ENCODE measurements at regions of chr16 and their contacts with region 1.

Region 1: DNA sequence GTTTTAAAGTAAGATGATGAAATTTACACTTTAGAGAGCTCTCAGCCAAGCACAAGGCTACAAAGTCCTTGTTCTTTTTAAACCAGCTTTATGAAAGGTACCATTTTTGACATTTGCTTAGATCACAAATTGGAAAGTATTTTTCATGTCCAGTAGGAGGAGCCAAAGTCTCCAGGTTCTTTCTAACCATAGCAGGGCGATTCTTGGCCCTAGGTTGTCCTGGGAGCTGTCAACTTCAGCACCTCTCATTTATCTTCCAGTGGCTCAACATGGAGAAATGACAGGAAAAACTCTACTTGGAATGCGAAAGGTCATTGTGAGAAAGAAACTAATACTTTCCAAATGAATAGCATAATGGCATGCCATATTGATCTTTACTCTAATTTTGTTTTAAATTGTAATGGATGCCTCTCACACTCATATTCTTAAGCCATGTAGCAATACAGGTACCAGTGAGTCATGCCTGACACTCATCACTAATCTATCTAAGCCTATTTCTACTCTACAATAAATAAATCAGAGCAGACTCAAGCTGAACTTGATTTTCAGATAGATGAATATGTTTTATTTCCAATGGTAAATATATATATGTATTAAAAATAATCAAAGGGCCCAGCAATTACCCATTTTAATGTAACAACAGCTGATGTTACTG is 919.1 kb upstream of the EEF2KMT start:
- DNase-seq: peak in 1 of 2 experiments; percentile 35
- H3K4me3 ChIP-seq: no peak overlapping the region
- H3K4me3 Mint-ChIP-seq: no peak overlapping the region
- H3K27ac Mint-ChIP-seq: no peak overlapping the region
- H3K4me1 ChIP-seq: no peaks in the 10 kb centered on the region
- H3K4me1 Mint-ChIP-seq: no peaks in the 10 kb centered on the region
- H3K27me3 ChIP-seq: no peaks in the 10 kb centered on the region
- H3K27me3 Mint-ChIP-seq: no peaks in the 10 kb centered on the region
- CTCF ChIP-seq: peak; percentile 33 to 51

Region 2: DNA sequence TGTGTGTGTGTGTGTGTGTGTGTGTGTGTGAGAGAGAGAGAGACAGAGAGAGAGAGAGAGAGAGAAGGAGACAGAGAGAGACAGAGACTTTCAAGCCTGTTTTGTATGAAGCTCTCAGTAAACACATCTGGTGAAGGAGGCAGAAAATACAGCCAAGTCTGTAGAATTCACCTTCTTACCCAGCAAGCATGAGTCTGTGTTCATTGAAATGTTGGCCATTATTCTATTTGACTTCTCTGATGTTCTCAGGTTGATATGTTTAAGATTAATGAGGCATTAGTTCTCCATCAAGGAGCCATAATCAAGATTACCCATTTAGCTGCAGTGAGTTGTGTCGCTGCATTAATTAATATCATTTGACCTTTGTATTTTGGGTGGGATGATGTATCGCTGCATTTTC is 23.3 kb before region 1 on chr16:
- CTCF ChIA-PET with region 1: no interaction called
- POLR2A ChIA-PET with region 1: no interaction called
- intact Hi-C with region 1: no loop called
- DNase-seq: no peak
- H3K4me3 ChIP-seq: no peak overlapping the region
- H3K4me3 Mint-ChIP-seq: no peak overlapping the region
- H3K27ac Mint-ChIP-seq: no peak overlapping the region
- H3K4me1 ChIP-seq: no peaks in the 10 kb centered on the region
- H3K4me1 Mint-ChIP-seq: no peaks in the 10 kb centered on the region
- H3K27me3 ChIP-seq: no peaks in the 10 kb centered on the region
- H3K27me3 Mint-ChIP-seq: no peaks in the 10 kb centered on the region
- CTCF ChIP-seq: no peak

Region 3: DNA sequence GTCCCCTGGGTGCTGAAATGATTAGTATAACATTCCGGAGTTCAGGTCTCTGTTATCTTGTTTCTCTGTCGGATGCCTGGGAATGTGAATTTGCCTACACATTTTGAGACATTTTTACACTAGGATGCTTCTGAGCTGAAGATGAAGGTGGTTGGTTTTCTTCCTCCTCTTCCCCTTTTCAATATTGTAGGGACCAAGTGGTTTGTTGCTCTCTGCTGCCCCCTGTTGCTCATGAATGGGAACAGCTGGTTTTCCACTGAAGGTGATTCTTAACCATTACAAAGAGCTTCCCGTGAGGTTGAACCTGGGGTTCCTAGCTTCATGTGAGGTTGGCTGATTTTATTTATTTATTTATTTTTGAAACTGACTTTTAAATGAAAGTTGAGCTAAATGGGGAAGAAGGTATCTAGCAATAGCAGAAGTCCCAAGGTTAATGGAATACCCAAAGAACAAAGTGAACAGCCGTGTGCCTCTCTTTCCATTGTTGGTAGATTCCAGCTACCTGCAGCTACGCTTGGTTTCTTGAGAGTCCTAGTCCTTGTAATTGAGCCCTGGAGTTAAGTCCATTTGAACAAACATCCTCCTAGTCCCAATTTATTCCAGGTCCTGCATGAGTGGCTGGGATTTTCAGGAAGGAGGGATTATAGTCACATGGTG is 64.8 kb after region 1 on chr16:
- CTCF ChIA-PET with region 1: interaction called, 7 read pairs
- POLR2A ChIA-PET with region 1: no interaction called
- intact Hi-C with region 1: loop called (anchors 1 kb)
- DNase-seq: peak in 1 of 2 experiments; percentile 30
- H3K4me3 ChIP-seq: no peak overlapping the region
- H3K4me3 Mint-ChIP-seq: no peak overlapping the region
- H3K27ac Mint-ChIP-seq: no peak overlapping the region
- H3K4me1 ChIP-seq: no peaks in the 10 kb centered on the region
- H3K4me1 Mint-ChIP-seq: no peaks in the 10 kb centered on the region
- H3K27me3 ChIP-seq: no peaks in the 10 kb centered on the region
- H3K27me3 Mint-ChIP-seq: peaks cover 6% of the 10 kb centered on the region
- CTCF ChIP-seq: peak; percentile 57 to 61